Endothelial cell of umbilical vein (primary cell): ENCODE measurements at regions of chr2 and their contacts with region 1.

Region 1: DNA sequence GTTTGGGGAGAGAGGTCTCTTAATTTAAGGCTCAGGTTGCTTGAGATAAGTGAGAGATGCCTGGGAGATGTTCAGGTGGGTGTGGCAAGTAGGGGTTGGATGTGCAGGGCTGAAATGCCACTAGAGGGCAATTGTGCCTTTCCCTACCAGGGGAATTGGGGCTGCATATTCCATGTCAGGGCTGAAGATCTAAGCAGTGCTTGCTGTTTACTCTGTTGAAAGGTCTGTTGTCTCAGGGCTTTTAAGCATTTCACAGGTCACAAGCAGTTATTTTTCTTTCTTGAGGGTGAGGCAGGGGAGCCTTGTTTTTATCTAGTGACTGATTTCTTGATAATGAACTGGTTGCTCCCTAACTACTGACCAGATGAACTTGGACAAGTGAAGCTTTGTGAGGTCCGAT is 7.9 kb downstream of the CCDC85A start:
- DNase-seq: peak; percentile 73
- H3K4me3 ChIP-seq: no peak overlapping the region
- H3K27ac ChIP-seq: no peak overlapping the region
- H3K4me1 ChIP-seq: peaks cover 12% of the 10 kb centered on the region
- H3K27me3 ChIP-seq: no peaks in the 10 kb centered on the region
- CTCF ChIP-seq: peak; percentile 71 to 84
- POLR2A ChIP-seq: no peak

Region 2: DNA sequence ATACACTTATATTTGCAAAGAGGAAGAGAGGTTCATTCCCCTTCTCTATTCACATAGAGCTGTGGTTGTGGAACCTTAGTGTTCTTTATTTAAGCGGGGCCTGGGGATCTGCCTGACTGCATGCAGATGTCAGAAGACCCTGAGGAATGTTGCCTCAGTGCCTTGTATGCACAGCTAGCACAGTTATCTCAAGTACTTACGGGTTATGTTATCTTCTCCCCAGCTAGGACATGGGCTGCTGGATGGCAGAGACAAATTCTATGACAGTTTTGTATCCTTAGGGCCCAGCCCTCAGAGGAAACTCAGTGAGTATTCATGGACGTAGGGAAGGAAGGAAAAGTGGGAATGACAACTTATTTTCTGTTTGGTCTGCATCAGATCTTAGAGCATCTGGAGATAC is 1103.7 kb before region 1 on chr2:
- CTCF ChIA-PET with region 1: no interaction called
- POLR2A ChIA-PET with region 1: no interaction called
- dilution Hi-C with region 1: no loop called
- intact Hi-C with region 1: no loop called
- DNase-seq: no peak
- H3K4me3 ChIP-seq: no peak overlapping the region
- H3K27ac ChIP-seq: no peak overlapping the region
- H3K4me1 ChIP-seq: peaks cover 34% of the 10 kb centered on the region
- H3K27me3 ChIP-seq: no peaks in the 10 kb centered on the region
- CTCF ChIP-seq: no peak
- POLR2A ChIP-seq: no peak

Region 3: DNA sequence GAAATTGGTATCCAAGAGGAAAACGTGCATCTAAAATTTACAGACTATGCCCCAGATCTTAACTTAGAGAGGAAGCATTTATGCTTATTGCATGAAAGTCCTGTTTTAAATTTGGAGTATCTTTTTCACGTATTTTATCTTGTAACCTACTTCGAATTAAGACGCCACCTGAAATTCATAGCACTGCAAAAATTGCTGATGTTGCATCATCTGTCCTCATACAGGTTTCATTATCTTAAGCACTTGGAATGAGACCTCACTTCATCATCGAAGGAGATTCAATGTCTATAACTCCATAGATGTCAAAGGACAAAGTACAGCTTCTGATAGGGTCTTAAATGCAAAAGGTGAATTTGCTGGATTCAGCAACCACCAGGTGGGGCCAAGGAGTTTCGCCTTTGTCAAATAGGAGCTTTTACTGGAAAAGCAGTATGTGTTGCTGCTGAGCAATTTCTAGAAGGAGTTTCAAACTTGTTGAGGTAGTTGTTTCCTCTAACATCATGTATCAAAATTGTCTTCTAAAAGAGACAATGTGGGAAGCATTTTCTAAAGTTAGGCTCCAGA is 114.2 kb before region 1 on chr2:
- CTCF ChIA-PET with region 1: no interaction called
- POLR2A ChIA-PET with region 1: no interaction called
- dilution Hi-C with region 1: no loop called
- intact Hi-C with region 1: no loop called
- DNase-seq: peak; percentile 42
- H3K4me3 ChIP-seq: no peak overlapping the region
- H3K27ac ChIP-seq: no peak overlapping the region
- H3K4me1 ChIP-seq: no peaks in the 10 kb centered on the region
- H3K27me3 ChIP-seq: peaks cover 0 to 2% of the 10 kb centered on the region in 2 experiments
- CTCF ChIP-seq: peak; percentile 33 to 58
- POLR2A ChIP-seq: no peak

Region 4: GRCh38 chr2:56390644-56391043 is 199.0 kb after region 1 on chr2:
- CTCF ChIA-PET with region 1: no interaction called
- POLR2A ChIA-PET with region 1: no interaction called
- dilution Hi-C with region 1: no loop called
- intact Hi-C with region 1: loop called (anchors 5 kb)
- DNase-seq: peak; percentile 35
- H3K4me3 ChIP-seq: no peak overlapping the region
- H3K27ac ChIP-seq: no peak overlapping the region
- H3K4me1 ChIP-seq: peaks cover 3% of the 10 kb centered on the region
- H3K27me3 ChIP-seq: no peaks in the 10 kb centered on the region
- CTCF ChIP-seq: no peak
- POLR2A ChIP-seq: no peak

Region 5: DNA sequence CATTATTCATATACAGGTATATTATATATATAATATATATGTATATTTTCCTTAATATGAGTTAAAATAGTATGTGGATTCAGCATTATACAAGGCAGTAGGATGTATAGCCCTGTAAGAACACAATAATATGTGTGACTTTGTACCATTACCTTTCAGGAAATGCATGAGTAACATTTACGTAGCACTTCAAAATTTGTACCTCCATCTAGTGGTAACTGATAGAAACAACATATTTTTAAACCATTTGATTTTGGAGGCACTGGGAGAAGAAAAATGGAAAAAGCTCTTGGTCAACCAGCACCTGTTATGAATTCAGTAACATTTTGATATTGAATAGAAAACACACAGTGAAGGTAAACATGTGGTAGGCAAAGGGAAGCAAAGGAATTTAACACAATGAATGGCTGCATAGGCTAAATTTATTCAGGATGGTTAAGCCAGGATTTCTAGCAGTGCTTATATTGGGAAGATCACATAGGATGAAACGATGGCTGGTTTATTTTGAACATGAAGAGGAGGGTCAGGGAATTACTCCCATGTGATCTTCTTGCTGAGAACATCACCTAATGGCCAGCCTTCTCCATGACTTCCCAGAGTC is 557.6 kb after region 1 on chr2:
- CTCF ChIA-PET with region 1: interaction called, 115 read pairs
- POLR2A ChIA-PET with region 1: no interaction called
- dilution Hi-C with region 1: no loop called
- intact Hi-C with region 1: loop called (anchors 1 kb)
- DNase-seq: peak; percentile 55
- H3K4me3 ChIP-seq: no peak overlapping the region
- H3K27ac ChIP-seq: no peak overlapping the region
- H3K4me1 ChIP-seq: no peaks in the 10 kb centered on the region
- H3K27me3 ChIP-seq: no peaks in the 10 kb centered on the region
- CTCF ChIP-seq: peak; percentile 25 to 29
- POLR2A ChIP-seq: no peak